Right cardiac atrium (tissue), 5 donors: ENCODE measurements at regions of chr16 and their contacts with region 1.

Region 1: GRCh38 chr16:65667011-65667578 is 545.2 kb upstream of the CDH11 start:
- DNase-seq: no peak
- ATAC-seq: no peak
- H3K4me3 ChIP-seq: no peak overlapping the region
- H3K27ac ChIP-seq: no peak overlapping the region
- H3K4me1 ChIP-seq: no peaks in the 10 kb centered on the region
- H3K27me3 ChIP-seq: no peaks in the 10 kb centered on the region

Region 2: DNA sequence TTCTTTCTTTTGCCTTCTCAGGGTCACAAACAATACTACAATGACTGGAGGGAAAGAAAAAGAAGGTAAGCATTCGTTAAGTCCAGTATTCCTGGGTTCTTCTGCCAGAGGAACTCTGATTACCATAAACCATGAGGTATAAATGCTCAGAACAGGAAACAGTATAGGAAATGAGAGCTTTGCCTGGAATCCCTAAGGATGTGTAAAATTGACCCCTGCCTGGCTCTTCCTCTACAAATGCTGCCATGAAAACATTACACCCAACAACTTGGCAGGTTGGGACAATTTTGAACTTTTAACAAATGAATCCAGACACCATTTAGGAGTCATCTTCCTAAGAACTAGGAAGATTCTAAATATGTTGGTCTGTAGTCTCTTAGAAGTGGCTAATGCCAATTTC is 719.0 kb before region 1 on chr16:
- intact Hi-C with region 1: no loop called
- DNase-seq: no peak
- ATAC-seq: peak in 1 of 2 donors; percentile 39
- H3K4me3 ChIP-seq: no peak overlapping the region
- H3K27ac ChIP-seq: no peak overlapping the region
- H3K4me1 ChIP-seq: no peaks in the 10 kb centered on the region
- H3K27me3 ChIP-seq: no peaks in the 10 kb centered on the region

Region 3: GRCh38 chr16:65809627-65810026 is 142.5 kb after region 1 on chr16:
- intact Hi-C with region 1: loop called in 1 of 4 experiments (anchors 5 kb)
- DNase-seq: no peak
- ATAC-seq: no peak
- H3K4me3 ChIP-seq: no peak overlapping the region
- H3K27ac ChIP-seq: no peak overlapping the region
- H3K4me1 ChIP-seq: no peaks in the 10 kb centered on the region
- H3K27me3 ChIP-seq: no peaks in the 10 kb centered on the region

Region 4: GRCh38 chr16:66026211-66026610 is 359.1 kb after region 1 on chr16:
- intact Hi-C with region 1: no loop called
- DNase-seq: no peak
- ATAC-seq: peak in 1 of 2 donors; percentile 36
- H3K4me3 ChIP-seq: no peak overlapping the region
- H3K27ac ChIP-seq: no peak overlapping the region
- H3K4me1 ChIP-seq: no peaks in the 10 kb centered on the region
- H3K27me3 ChIP-seq: no peaks in the 10 kb centered on the region